ENCODE measurements at regions of chr13 and their contacts with region 1.

Region 1: DNA sequence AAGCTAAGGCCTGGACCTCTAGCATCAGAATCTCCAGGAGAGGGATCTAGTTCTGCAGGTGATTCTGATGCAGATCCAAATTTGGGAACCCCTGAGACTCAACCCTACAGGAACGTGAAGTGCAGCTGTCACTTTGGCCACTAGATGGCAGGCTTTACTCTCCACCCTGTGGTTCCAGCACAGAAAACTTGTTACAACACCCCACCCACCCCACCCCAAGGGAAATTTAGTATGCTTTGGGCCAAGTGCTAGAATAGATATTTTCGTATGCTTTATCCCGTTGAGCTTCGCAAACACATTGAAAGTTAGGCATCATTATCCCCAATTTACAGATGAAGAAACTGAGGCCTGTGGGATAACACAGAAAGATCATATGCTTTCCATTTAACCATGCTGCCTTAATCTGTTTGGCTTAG is 232.0 kb downstream of the B3GLCT start:
- DNase-seq: peak; percentile 27
- ATAC-seq: no peak
- H3K4me3 ChIP-seq: no peak overlapping the region
- H3K27ac ChIP-seq: no peak overlapping the region
- H3K4me1 ChIP-seq: no peaks in the 10 kb centered on the region
- H3K27me3 ChIP-seq: no peaks in the 10 kb centered on the region; the same call in 1 of the 2 replicates
- CTCF ChIP-seq: peak; percentile 83

Region 2: DNA sequence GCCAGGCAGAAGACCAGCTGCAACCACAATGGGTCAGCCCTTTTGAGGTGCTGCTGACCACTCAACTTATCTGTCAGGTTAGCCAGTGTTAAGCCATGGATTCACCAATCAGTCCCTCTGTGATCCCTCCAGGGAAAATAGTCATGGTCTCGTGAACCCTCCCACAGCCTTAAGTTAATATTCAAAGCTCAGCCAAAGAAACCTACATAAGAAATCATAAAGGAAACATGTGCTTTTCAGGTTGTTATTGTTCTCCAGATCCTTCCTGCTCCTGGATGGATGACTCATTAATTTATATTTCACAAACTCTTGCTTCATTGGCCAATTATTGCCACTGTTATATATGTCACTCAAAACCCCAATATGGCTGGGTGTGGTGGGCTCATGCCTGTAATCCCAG is 70.1 kb before region 1 on chr13:
- CTCF ChIA-PET with region 1: no interaction called
- POLR2A ChIA-PET with region 1: no interaction called
- in situ Hi-C with region 1: no loop called
- intact Hi-C with region 1: no loop called
- DNase-seq: no peak
- ATAC-seq: no peak
- H3K4me3 ChIP-seq: no peak overlapping the region
- H3K27ac ChIP-seq: no peak overlapping the region
- H3K4me1 ChIP-seq: no peaks in the 10 kb centered on the region
- H3K27me3 ChIP-seq: no peaks in the 10 kb centered on the region
- CTCF ChIP-seq: no peak

Region 3: GRCh38 chr13:31797154-31797775 is 365.5 kb after region 1 on chr13:
- CTCF ChIA-PET with region 1: no interaction called
- POLR2A ChIA-PET with region 1: no interaction called
- in situ Hi-C with region 1: no loop called
- intact Hi-C with region 1: loop called (anchors 5 kb)
- DNase-seq: no peak
- ATAC-seq: no peak
- H3K4me3 ChIP-seq: no peak overlapping the region
- H3K27ac ChIP-seq: no peak overlapping the region
- H3K4me1 ChIP-seq: no peaks in the 10 kb centered on the region
- H3K27me3 ChIP-seq: no peaks in the 10 kb centered on the region
- CTCF ChIP-seq: peak; percentile 47; the same call in 1 of the 2 replicates

Region 4: GRCh38 chr13:31835932-31836331 is 404.2 kb after region 1 on chr13:
- CTCF ChIA-PET with region 1: no interaction called
- POLR2A ChIA-PET with region 1: no interaction called
- in situ Hi-C with region 1: no loop called
- intact Hi-C with region 1: no loop called
- DNase-seq: no peak
- ATAC-seq: no peak
- H3K4me3 ChIP-seq: no peak overlapping the region
- H3K27ac ChIP-seq: no peak overlapping the region
- H3K4me1 ChIP-seq: no peaks in the 10 kb centered on the region
- H3K27me3 ChIP-seq: no peaks in the 10 kb centered on the region
- CTCF ChIP-seq: no peak